Panc1 (cell line): ENCODE measurements at regions of chr7 and their contacts with region 1.

Region 1: GRCh38 chr7:23410446-23411183 is 59.7 kb downstream of the IGF2BP3 start:
- DNase-seq: no peak
- ATAC-seq: no peak
- H3K4me3 ChIP-seq: no peak overlapping the region
- H3K27ac ChIP-seq: no peak overlapping the region
- H3K4me1 ChIP-seq: no peaks in the 10 kb centered on the region
- H3K27me3 ChIP-seq: no peaks in the 10 kb centered on the region
- CTCF ChIP-seq: no peak

Region 2: DNA sequence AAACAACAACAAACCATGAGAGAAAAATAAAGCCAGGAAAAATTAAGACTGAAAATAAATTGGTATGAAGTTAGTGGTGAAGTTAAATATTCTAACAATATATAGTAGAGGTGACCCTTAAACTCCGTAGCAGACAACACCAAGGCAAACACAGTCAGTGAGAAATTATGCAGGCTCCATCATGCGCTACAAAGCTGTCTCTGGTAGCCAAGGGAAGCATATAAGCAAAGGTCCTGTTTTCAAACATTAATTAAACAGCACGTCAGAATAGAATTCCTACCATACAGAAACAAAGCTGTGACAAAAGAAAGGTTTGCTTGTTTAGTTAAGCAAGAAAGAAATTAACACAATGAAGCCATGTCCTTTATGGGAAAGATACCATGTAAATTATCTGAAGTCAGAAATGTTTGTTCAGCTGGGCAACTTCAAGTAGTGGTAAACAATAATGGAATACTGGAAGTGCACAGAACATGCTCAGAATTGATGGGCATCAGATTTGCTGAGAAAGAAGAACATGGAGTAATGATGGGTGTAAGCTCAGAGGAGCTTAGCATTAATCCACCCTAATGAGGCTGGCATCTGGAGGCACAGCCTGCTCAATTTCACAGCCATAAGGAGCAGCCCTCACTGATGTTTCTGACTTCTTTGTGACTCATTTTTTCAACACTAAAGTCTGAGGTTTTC is 16.0 kb before region 1 on chr7:
- CTCF ChIA-PET with region 1: no interaction called
- POLR2A ChIA-PET with region 1: interaction called, 18 read pairs
- in situ Hi-C with region 1: no loop called
- intact Hi-C with region 1: no loop called
- DNase-seq: no peak
- ATAC-seq: no peak
- H3K4me3 ChIP-seq: no peak overlapping the region
- H3K27ac ChIP-seq: no peak overlapping the region
- H3K4me1 ChIP-seq: 0 out of 2 replicates have a peak, but pooled peaks cover 4% of the 10 kb centered on the region
- H3K27me3 ChIP-seq: no peaks in the 10 kb centered on the region
- CTCF ChIP-seq: no peak

Region 3: DNA sequence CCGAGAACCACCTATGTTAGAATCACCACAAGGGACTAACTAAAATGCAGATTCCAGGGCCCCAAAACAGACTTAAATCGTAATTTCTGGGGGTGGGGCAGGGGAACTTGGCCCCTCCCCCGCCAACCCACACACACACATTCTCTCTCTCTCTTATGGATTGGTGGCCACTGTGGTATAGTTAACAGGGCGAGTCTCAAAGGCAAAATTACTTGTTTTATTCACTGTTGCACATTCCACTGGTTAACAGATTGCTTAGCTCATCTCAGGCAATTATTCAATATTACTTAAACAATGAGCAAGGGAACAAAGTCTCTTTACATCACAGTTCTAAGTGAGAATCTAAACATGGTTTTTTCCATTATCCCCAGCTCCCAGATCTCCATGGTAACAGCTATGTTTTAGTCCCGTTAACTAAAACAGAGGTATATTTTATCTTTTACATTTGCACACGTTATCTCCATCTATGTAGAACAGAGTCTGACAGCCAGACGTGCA is 21.1 kb after region 1 on chr7:
- CTCF ChIA-PET with region 1: no interaction called
- POLR2A ChIA-PET with region 1: no interaction called
- in situ Hi-C with region 1: no loop called
- intact Hi-C with region 1: no loop called
- DNase-seq: no peak
- ATAC-seq: no peak
- H3K4me3 ChIP-seq: no peak overlapping the region
- H3K27ac ChIP-seq: peak overlapping the region; percentile 68
- H3K4me1 ChIP-seq: peaks cover 35% of the 10 kb centered on the region
- H3K27me3 ChIP-seq: no peaks in the 10 kb centered on the region
- CTCF ChIP-seq: no peak

Region 4: DNA sequence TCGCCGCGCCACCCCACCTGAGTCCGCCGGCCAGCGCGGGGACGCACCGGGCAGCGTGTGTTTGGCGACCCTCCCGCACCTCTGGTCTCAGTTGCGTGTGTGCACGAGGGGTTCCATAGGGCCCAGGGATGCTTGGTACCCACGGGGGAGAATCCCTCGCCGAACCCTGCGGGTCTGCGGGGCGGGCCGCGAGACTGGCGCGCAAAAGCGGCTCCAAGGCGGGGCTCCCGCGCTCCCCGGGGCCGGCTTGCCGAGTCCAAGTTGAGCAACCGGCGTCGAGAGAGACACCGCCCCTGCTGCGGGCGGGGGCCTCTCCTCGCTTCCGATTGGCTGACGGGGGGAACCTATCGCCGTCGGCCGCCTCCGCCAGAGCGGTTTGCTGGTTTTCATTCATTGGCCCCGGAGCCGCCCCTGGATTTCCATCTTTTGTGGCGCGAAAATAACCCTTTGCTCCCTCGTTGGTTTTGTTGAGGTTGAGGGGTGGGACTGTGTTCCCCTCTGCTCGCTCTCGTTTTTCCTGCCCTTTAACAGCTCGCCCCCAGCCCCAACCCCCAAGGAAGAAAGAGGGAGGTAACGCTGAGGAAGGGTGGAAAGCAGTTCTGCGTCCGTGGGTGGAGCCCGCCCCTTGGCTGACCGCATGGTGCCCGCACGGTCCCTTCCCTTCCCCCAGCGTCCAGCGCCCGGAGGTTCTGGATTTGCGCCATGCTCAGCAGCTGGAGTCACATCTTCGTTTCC is 63.6 kb after region 1 on chr7:
- CTCF ChIA-PET with region 1: no interaction called
- POLR2A ChIA-PET with region 1: no interaction called
- in situ Hi-C with region 1: no loop called
- intact Hi-C with region 1: no loop called
- DNase-seq: no peak
- ATAC-seq: peak; percentile 82
- H3K4me3 ChIP-seq: peak overlapping the region; percentile 88 to 98
- H3K27ac ChIP-seq: peak overlapping the region; percentile 100
- H3K4me1 ChIP-seq: peaks cover 25% of the 10 kb centered on the region
- H3K27me3 ChIP-seq: no peaks in the 10 kb centered on the region
- CTCF ChIP-seq: no peak

Region 5: DNA sequence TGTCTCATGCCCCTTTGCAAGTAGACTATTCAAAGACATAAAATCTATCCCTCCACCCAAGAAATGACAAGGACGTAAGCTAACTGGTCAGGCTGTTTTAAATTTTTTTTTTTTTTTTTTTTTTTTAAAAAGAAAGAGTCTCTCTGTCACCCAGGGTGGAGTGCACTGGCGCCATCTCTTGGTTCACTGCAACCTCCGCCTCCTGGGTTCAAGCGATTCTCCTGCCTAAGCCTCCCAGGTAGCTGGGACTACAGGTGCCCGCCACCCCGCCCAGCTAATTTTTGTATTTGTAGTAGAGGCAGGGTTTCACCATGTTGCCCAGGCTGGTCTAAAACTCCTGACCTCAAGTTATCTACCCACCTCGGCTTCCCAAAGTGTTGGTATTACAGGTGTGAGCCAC is 110.0 kb after region 1 on chr7:
- CTCF ChIA-PET with region 1: no interaction called
- POLR2A ChIA-PET with region 1: interaction called, 11 read pairs
- in situ Hi-C with region 1: no loop called
- intact Hi-C with region 1: no loop called
- DNase-seq: no peak
- ATAC-seq: 0 out of 2 replicates have a peak, but pooled peaks have one; percentile 16
- H3K4me3 ChIP-seq: no peak overlapping the region
- H3K27ac ChIP-seq: no peak overlapping the region
- H3K4me1 ChIP-seq: peaks cover 17% of the 10 kb centered on the region
- H3K27me3 ChIP-seq: no peaks in the 10 kb centered on the region
- CTCF ChIP-seq: no peak